Activated CD4-positive, alpha-beta T cell treated with anti-CD3 and anti-CD28 coated beads for 36 hours (primary cell): ENCODE measurements at regions of chr4 and their contacts with region 1.

Region 1: GRCh38 chr4:173223743-173224142 is 55.1 kb downstream of the GALNT7 start:
- DNase-seq: no peak
- ATAC-seq: no peak
- H3K4me3 Mint-ChIP-seq: no peak overlapping the region
- H3K27ac Mint-ChIP-seq: no peak overlapping the region
- H3K4me1 Mint-ChIP-seq: peaks cover 13% of the 10 kb centered on the region
- H3K27me3 Mint-ChIP-seq: no peaks in the 10 kb centered on the region

Region 2: GRCh38 chr4:173211838-173212237 is 11.9 kb before region 1 on chr4:
- CTCF ChIA-PET with region 1: interaction called, 11 read pairs
- POLR2A ChIA-PET with region 1: no interaction called
- intact Hi-C with region 1: no loop called
- DNase-seq: no peak
- ATAC-seq: peak; percentile 68
- H3K4me3 Mint-ChIP-seq: no peak overlapping the region
- H3K27ac Mint-ChIP-seq: no peak overlapping the region
- H3K4me1 Mint-ChIP-seq: peaks cover 13% of the 10 kb centered on the region
- H3K27me3 Mint-ChIP-seq: no peaks in the 10 kb centered on the region